Activated CD4-positive, alpha-beta T cell treated with anti-CD3 and anti-CD28 coated beads for 36 hours (primary cell): ENCODE measurements at regions of chr9 and their contacts with region 1.

Region 1: GRCh38 chr9:1683951-1684350 is 331.2 kb upstream of the SMARCA2 start:
- DNase-seq: no peak
- ATAC-seq: no peak
- H3K4me3 Mint-ChIP-seq: no peak overlapping the region
- H3K27ac Mint-ChIP-seq: no peak overlapping the region
- H3K4me1 Mint-ChIP-seq: no peaks in the 10 kb centered on the region
- H3K27me3 Mint-ChIP-seq: peaks cover 19% of the 10 kb centered on the region

Region 2: DNA sequence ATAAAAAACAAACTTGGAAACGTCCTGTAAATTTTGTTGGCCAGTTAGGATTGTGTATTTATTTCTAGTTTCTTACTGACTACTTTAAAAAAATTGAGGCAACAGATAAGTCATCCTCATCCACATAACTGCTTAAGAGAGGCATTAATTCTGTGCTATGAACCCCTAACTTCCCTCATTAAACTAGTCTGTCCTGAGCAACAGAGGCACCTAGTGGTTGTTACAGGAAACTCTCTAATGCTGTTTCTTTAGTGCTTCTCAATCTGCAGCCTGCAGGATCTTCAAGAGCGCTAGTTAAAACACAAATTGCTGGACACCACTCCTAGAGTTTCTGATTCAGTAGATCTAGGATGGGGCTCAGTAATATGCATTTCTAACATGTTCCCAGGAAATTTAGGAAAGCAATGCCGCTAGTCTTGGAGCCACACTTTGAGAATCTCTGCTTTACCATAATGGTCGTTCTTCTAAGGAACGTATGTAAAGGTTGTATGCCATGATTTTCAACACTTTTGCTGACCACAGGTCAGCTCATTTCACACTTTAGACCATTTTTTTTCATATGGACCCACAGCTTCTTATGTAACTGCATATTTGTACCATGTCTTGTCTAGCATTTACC is 78.9 kb before region 1 on chr9:
- CTCF ChIA-PET with region 1: no interaction called
- POLR2A ChIA-PET with region 1: no interaction called
- intact Hi-C with region 1: no loop called
- DNase-seq: no peak
- ATAC-seq: no peak
- H3K4me3 Mint-ChIP-seq: no peak overlapping the region
- H3K27ac Mint-ChIP-seq: no peak overlapping the region
- H3K4me1 Mint-ChIP-seq: no peaks in the 10 kb centered on the region
- H3K27me3 Mint-ChIP-seq: peaks cover 18% of the 10 kb centered on the region

Region 3: GRCh38 chr9:1747417-1747967 is 63.5 kb after region 1 on chr9:
- CTCF ChIA-PET with region 1: no interaction called
- POLR2A ChIA-PET with region 1: no interaction called
- intact Hi-C with region 1: loop called in 1 of 2 experiments (anchors 10 kb)
- DNase-seq: no peak
- ATAC-seq: no peak
- H3K4me3 Mint-ChIP-seq: no peak overlapping the region
- H3K27ac Mint-ChIP-seq: no peak overlapping the region
- H3K4me1 Mint-ChIP-seq: no peaks in the 10 kb centered on the region
- H3K27me3 Mint-ChIP-seq: peaks cover 7% of the 10 kb centered on the region

Region 4: DNA sequence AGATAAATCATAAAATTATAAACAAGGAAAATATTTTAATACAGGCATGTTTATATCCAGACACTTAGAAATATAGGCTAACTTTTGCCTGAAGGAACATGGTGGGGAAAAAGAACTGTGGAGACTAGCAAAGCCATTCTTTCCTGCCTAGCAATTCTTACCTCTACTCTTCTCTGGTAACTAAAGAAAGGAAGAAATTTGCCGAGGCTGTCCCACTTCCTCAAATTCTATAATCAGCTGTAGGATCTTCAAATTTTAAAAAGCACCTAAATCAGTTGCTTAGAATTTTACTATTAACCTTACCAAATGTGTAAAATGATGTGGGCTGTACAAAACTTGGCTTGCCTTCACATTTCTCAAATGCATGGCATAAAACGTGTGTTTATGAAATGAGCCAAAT is 82.1 kb after region 1 on chr9:
- CTCF ChIA-PET with region 1: no interaction called
- POLR2A ChIA-PET with region 1: no interaction called
- intact Hi-C with region 1: no loop called
- DNase-seq: no peak
- ATAC-seq: no peak
- H3K4me3 Mint-ChIP-seq: no peak overlapping the region
- H3K27ac Mint-ChIP-seq: no peak overlapping the region
- H3K4me1 Mint-ChIP-seq: no peaks in the 10 kb centered on the region
- H3K27me3 Mint-ChIP-seq: peaks cover 13% of the 10 kb centered on the region

Region 5: GRCh38 chr9:1979741-1980367 is 295.9 kb after region 1 on chr9:
- CTCF ChIA-PET with region 1: no interaction called
- POLR2A ChIA-PET with region 1: no interaction called
- intact Hi-C with region 1: no loop called
- DNase-seq: no peak
- ATAC-seq: no peak
- H3K4me3 Mint-ChIP-seq: no peak overlapping the region
- H3K27ac Mint-ChIP-seq: no peak overlapping the region
- H3K4me1 Mint-ChIP-seq: no peaks in the 10 kb centered on the region
- H3K27me3 Mint-ChIP-seq: no peaks in the 10 kb centered on the region